Pancreas (tissue), 10 donors: ENCODE measurements at regions of chr17 and their contacts with region 1.

Region 1: DNA sequence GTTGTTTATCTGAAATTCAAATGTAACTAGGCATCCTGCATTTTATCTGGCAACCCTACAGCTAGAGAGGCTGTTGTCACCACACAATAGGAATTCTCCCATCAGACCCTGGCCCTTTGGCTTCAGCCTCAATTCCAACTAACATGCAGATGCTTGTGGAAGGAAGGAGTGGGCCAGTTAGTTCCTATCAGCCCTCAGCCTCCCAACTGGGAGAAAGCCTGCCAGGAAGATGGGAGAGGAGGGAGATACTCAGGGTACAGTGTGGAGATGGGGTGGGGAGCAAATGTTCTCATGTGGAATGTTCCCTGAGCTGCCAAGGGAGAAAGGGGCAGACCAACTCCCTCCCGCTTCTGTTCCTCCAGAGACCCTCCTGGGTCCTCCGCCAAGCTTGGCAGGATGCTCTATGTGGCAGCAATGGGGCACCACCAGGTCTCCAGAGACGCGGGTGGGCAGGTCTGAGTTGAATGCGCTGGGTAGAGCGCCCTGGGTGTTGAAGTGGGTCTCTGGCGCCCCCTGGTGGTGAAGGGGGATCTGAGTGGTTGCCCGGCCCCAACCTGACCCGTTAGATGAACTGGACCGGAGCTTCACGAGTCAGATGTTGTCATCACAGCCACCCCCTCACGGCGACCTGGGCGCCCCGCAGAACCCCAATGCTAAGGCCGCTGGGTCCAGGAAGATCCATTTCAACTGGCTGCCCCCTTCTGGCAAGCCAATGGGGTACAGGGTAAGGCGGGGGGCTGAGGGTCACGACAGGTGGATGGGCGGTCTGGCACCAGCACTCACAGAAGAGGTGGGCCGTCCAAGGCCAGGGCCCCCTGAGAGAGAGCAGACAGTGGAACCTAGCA is 15.2 kb downstream of the GALK1 start:
- DNase-seq: peak; percentile 68 to 97 (median 88)
- ATAC-seq: peak; percentile 63 to 76 (median 69)
- H3K4me3 ChIP-seq: no peak overlapping the region
- H3K27ac ChIP-seq: no peak overlapping the region
- H3K4me1 ChIP-seq: no peaks in the 10 kb centered on the region
- H3K27me3 ChIP-seq: no peaks in the 10 kb centered on the region
- CTCF ChIP-seq: peak; percentile 89 to 98 (median 94)

Region 2: GRCh38 chr17:75428543-75429469 is 321.0 kb before region 1 on chr17:
- intact Hi-C with region 1: loop called in 1 of 3 experiments (anchors 5 kb)
- DNase-seq: no peak
- ATAC-seq: peak in 2 of 4 donors; percentile 32 to 65
- H3K4me3 ChIP-seq: no peak overlapping the region
- H3K27ac ChIP-seq: no peak overlapping the region
- H3K4me1 ChIP-seq: no peaks in the 10 kb centered on the region
- H3K27me3 ChIP-seq: no peaks in the 10 kb centered on the region
- CTCF ChIP-seq: no peak

Region 3: GRCh38 chr17:75625813-75626486 is 123.8 kb before region 1 on chr17:
- intact Hi-C with region 1: loop called in 2 of 3 experiments (anchors 5 kb)
- DNase-seq: peak in 1 of 6 donors; percentile 63
- ATAC-seq: peak in 3 of 4 donors; percentile 35 to 61 (median 55)
- H3K4me3 ChIP-seq: no peak overlapping the region
- H3K27ac ChIP-seq: no peak overlapping the region
- H3K4me1 ChIP-seq: no peaks in the 10 kb centered on the region
- H3K27me3 ChIP-seq: no peaks in the 10 kb centered on the region
- CTCF ChIP-seq: peak in 3 of 4 donors; percentile 11 to 38 (median 35)

Region 4: GRCh38 chr17:75632863-75633485 is 116.8 kb before region 1 on chr17 and contains the start of gene SMIM5:
- intact Hi-C with region 1: loop called in 2 of 3 experiments (anchors 5 kb)
- DNase-seq: peak; percentile 74 to 97 (median 88)
- ATAC-seq: peak; percentile 83 to 88 (median 88)
- H3K4me3 ChIP-seq: peak within 1 kb of the TSS in 1 of 4 donors; percentile 17
- H3K27ac ChIP-seq: peak within 1 kb of the TSS; percentile 17 to 68 (median 54)
- H3K4me1 ChIP-seq: peaks cover 13 to 14% (median 14%) of the 10 kb centered on the region in 3 donors
- H3K27me3 ChIP-seq: no peaks in the 10 kb centered on the region
- CTCF ChIP-seq: peak; percentile 95 to 99 (median 97)
- total RNA-seq, gene SMIM5: 0.55 to 1.2 (median 0.82) TPM

Region 5: GRCh38 chr17:75673487-75673886 is 76.3 kb before region 1 on chr17:
- intact Hi-C with region 1: loop called (anchors 2 to 10 kb)
- DNase-seq: peak in 1 of 6 donors; percentile 11
- ATAC-seq: no peak
- H3K4me3 ChIP-seq: no peak overlapping the region
- H3K27ac ChIP-seq: no peak overlapping the region
- H3K4me1 ChIP-seq: peaks cover 0 to 6% (median 0%) of the 10 kb centered on the region in 3 donors
- H3K27me3 ChIP-seq: no peaks in the 10 kb centered on the region
- CTCF ChIP-seq: no peak

Region 6: GRCh38 chr17:75679706-75680442 is 69.9 kb before region 1 on chr17:
- intact Hi-C with region 1: loop called in 1 of 3 experiments (anchors 10 kb)
- DNase-seq: no peak
- ATAC-seq: peak in 3 of 4 donors; percentile 58 to 67 (median 62)
- H3K4me3 ChIP-seq: no peak overlapping the region
- H3K27ac ChIP-seq: no peak overlapping the region
- H3K4me1 ChIP-seq: peaks cover 0 to 10% (median 0%) of the 10 kb centered on the region in 3 donors
- H3K27me3 ChIP-seq: no peaks in the 10 kb centered on the region
- CTCF ChIP-seq: no peak